ENCODE measurements at regions of chr2 and their contacts with region 1.

Region 1: GRCh38 chr2:127763776-127764175 is 47.2 kb downstream of the WDR33 start:
- DNase-seq: no peak
- H3K27ac ChIP-seq: no peak overlapping the region
- CTCF ChIP-seq: no peak

Region 2: GRCh38 chr2:127695491-127696472 is 68.0 kb before region 1 on chr2:
- CTCF ChIA-PET with region 1: no interaction called
- POLR2A ChIA-PET with region 1: interaction called, 14 read pairs
- DNase-seq: no peak
- H3K27ac ChIP-seq: no peak overlapping the region
- CTCF ChIP-seq: no peak